Ovary (tissue), 10 donors: ENCODE measurements at regions of chrX and their contacts with region 1.

Region 1: GRCh38 chrX:105451401-105451800 is 230.9 kb upstream of the TEX13A start:
- DNase-seq: no peak
- H3K4me3 ChIP-seq: no peak overlapping the region
- H3K27ac ChIP-seq: no peak overlapping the region
- H3K4me1 ChIP-seq: no peaks in the 10 kb centered on the region
- H3K27me3 ChIP-seq: no peaks in the 10 kb centered on the region
- CTCF ChIP-seq: no peak
- EP300 ChIP-seq: no peak
- POLR2A ChIP-seq: no peak

Region 2: GRCh38 chrX:105483011-105483410 is 31.6 kb after region 1 on chrX:
- intact Hi-C with region 1: no loop called
- DNase-seq: no peak
- H3K4me3 ChIP-seq: no peak overlapping the region
- H3K27ac ChIP-seq: no peak overlapping the region
- H3K4me1 ChIP-seq: no peaks in the 10 kb centered on the region
- H3K27me3 ChIP-seq: no peaks in the 10 kb centered on the region
- CTCF ChIP-seq: no peak
- EP300 ChIP-seq: no peak
- POLR2A ChIP-seq: no peak

Region 3: DNA sequence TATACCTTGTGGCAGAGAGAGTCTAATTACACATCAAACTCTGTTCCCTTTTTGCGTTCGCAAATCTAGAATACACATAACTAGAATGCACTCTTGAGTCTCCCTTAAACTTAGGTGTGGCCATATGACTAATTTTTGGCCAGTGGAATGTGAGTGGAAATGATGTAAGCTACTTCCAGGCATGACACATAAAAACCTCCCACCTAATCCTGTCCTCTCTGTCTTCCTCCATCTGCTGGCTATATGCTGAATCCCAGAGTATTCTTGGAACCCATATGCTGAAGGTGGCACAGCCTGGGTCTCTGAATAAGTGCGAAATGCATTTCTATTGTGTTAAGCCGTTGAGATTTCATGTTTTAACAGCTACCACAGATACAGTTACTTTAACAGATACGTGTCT is 101.0 kb after region 1 on chrX:
- intact Hi-C with region 1: loop called in 1 of 4 experiments (anchors 5 kb)
- DNase-seq: no peak
- H3K4me3 ChIP-seq: no peak overlapping the region
- H3K27ac ChIP-seq: no peak overlapping the region
- H3K4me1 ChIP-seq: no peaks in the 10 kb centered on the region
- H3K27me3 ChIP-seq: no peaks in the 10 kb centered on the region
- CTCF ChIP-seq: no peak
- EP300 ChIP-seq: no peak
- POLR2A ChIP-seq: no peak

Region 4: DNA sequence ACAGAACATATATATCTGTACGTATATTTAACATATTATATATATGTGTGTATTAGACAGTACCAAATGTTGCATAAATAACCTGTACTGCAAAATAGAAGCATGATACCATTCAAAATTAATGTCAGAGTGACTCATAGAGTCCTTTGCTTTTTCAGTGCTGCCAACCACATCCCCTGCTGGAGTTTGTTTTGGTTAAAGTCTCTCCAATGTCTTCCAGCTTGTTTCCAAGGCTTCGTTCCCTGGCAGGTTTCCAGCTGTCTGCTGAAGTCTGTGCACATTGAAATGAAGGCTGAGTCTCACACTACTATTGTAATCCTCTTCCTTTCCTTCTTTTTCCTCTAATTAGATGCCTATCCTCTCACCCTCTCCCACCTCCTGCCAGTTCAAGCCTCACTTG is 385.8 kb after region 1 on chrX:
- intact Hi-C with region 1: no loop called
- DNase-seq: peak; percentile 77 to 91 (median 87)
- H3K4me3 ChIP-seq: no peak overlapping the region
- H3K27ac ChIP-seq: no peak overlapping the region
- H3K4me1 ChIP-seq: no peaks in the 10 kb centered on the region
- H3K27me3 ChIP-seq: no peaks in the 10 kb centered on the region
- CTCF ChIP-seq: no peak
- EP300 ChIP-seq: no peak
- POLR2A ChIP-seq: no peak